Right lobe of liver (tissue), 6 donors: ENCODE measurements at regions of chr15 and their contacts with region 1.

Region 1: DNA sequence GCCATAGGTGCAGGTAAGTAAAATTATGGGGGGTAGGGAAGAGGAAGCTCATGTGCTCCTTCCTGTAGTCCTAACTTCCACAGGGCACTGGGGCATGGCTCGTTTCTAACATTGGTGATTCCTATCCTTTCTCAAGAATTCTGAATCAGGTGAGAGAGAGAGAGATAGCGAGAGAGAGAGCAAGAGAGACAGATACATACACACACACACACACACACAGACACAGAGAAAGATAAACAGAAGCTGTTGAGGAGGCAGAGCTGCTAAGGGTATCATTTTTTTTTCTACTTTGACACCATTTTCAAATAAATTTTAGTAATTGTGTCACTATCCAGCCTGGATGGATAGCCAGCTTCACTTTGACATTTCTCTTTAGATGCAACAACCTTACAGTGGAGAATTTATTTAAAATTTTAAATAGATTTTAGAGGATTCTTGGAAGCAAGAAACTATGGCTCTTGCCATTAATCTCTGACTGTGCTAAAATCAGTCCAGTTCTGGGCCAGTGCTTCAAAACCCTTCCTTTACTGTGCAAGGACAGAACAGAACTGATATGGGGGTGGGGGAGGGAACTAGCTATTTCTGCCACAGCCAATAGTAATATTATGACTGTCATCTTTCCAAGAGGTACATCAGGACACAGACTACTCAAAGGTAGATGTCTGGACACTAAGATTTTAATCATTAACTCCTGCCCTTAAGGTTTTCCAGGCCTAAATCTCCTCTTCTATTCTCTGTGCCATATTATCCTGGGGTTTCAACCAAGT is 14.6 kb upstream of the RAMAC start:
- DNase-seq: peak in 1 of 3 donors; percentile 61
- ATAC-seq: peak; percentile 55 to 85 (median 81)
- H3K4me3 ChIP-seq: no peak overlapping the region
- H3K27ac ChIP-seq: peak overlapping the region in 2 of 3 donors; percentile 57 to 74
- H3K4me1 ChIP-seq: peaks cover 0 to 32% (median 13%) of the 10 kb centered on the region in 4 donors
- H3K27me3 ChIP-seq: no peaks in the 10 kb centered on the region
- CTCF ChIP-seq: no peak
- POLR2A ChIP-seq: no peak

Region 2: DNA sequence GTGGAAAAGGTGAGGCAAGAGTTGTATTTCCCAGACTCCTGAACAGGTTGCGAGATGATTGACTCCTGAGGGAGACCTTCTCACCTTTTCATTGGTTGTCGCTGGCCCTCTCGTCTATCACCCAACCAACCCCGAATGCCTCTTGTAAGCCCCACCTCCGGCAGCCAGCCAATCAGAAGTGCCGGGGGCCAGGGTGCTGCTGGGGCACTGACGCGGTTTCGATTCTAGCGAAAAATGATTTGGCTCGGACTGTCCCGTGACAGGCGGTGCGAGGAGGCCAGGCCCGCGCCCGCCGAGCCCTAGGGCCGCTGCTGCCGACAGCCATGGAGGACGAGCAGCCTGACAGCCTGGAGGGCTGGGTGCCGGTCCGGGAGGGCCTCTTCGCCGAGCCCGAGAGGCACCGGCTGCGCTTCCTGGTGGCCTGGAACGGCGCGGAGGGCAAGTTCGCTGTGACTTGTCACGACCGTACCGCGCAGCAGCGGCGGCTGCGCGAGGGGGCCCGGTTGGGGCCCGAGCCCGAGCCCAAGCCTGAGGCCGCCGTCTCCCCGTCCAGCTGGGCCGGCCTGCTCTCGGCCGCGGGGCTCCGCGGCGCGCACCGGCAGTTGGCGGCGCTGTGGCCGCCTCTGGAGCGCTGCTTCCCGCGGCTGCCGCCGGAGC is 161.9 kb before region 1 on chr15 and contains the start of gene WHAMM:
- intact Hi-C with region 1: no loop called
- DNase-seq: peak; percentile 98 to 100 (median 99)
- ATAC-seq: peak; percentile 98 to 99 (median 99)
- H3K4me3 ChIP-seq: peak within 1 kb of the TSS; percentile 83 to 92 (median 83)
- H3K27ac ChIP-seq: peak within 1 kb of the TSS; percentile 97 to 99 (median 99)
- H3K4me1 ChIP-seq: peaks cover 0 to 28% (median 10%) of the 10 kb centered on the region in 4 donors
- H3K27me3 ChIP-seq: no peaks in the 10 kb centered on the region
- CTCF ChIP-seq: peak in 2 of 4 donors; percentile 4 to 34
- POLR2A ChIP-seq: peak; percentile 97
- total RNA-seq, gene WHAMM: 3.7 to 6.5 (median 4.7) TPM

Region 3: GRCh38 chr15:82849556-82850512 is 121.6 kb before region 1 on chr15:
- intact Hi-C with region 1: loop called in 1 of 2 experiments (anchors 10 kb)
- DNase-seq: peak; percentile 88 to 93 (median 93)
- ATAC-seq: peak; percentile 95 to 98 (median 96)
- H3K4me3 ChIP-seq: no peak overlapping the region
- H3K27ac ChIP-seq: peak overlapping the region; percentile 23 to 86 (median 77)
- H3K4me1 ChIP-seq: peaks cover 0 to 17% (median 10%) of the 10 kb centered on the region in 4 donors
- H3K27me3 ChIP-seq: no peaks in the 10 kb centered on the region
- CTCF ChIP-seq: peak; percentile 69 to 86 (median 78)
- POLR2A ChIP-seq: no peak

Region 4: GRCh38 chr15:83127648-83128047 is 156.2 kb after region 1 on chr15:
- intact Hi-C with region 1: no loop called
- DNase-seq: no peak
- ATAC-seq: no peak
- H3K4me3 ChIP-seq: no peak overlapping the region
- H3K27ac ChIP-seq: no peak overlapping the region
- H3K4me1 ChIP-seq: no peaks in the 10 kb centered on the region
- H3K27me3 ChIP-seq: no peaks in the 10 kb centered on the region
- CTCF ChIP-seq: no peak
- POLR2A ChIP-seq: no peak